Heart right ventricle (tissue), 16 donors: ENCODE measurements at regions of chr2 and their contacts with region 1.

Region 1: GRCh38 chr2:228819701-228820100 is 451.4 kb downstream of the PID1 start:
- DNase-seq: no peak
- ATAC-seq: no peak
- H3K4me3 ChIP-seq: no peak overlapping the region
- H3K27ac ChIP-seq: no peak overlapping the region
- H3K4me1 ChIP-seq: no peaks in the 10 kb centered on the region
- H3K27me3 ChIP-seq: no peaks in the 10 kb centered on the region
- CTCF ChIP-seq: no peak

Region 2: GRCh38 chr2:228798458-228799207 is 21.1 kb before region 1 on chr2:
- intact Hi-C with region 1: loop called in 1 of 10 experiments (anchors 1 kb)
- DNase-seq: no peak
- ATAC-seq: no peak
- H3K4me3 ChIP-seq: no peak overlapping the region
- H3K27ac ChIP-seq: no peak overlapping the region
- H3K4me1 ChIP-seq: peaks cover 0 to 4% (median 0%) of the 10 kb centered on the region in 9 donors
- H3K27me3 ChIP-seq: no peaks in the 10 kb centered on the region
- CTCF ChIP-seq: no peak